ENCODE measurements at regions of chr1 and their contacts with region 1.

Region 1: GRCh38 chr1:23864801-23865542 is 3.1 kb downstream of the FUCA1 start:
- DNase-seq: no peak

Region 2: GRCh38 chr1:23772049-23772853 is 92.7 kb before region 1 on chr1:
- intact Hi-C with region 1: loop called in 1 of 2 experiments (anchors 5 kb)
- DNase-seq: peak; percentile 97

Measured in posterior vena cava (tissue), 2 donors.